RWPE1 (cell line): ENCODE measurements at regions of chr9 and their contacts with region 1.

Region 1: DNA sequence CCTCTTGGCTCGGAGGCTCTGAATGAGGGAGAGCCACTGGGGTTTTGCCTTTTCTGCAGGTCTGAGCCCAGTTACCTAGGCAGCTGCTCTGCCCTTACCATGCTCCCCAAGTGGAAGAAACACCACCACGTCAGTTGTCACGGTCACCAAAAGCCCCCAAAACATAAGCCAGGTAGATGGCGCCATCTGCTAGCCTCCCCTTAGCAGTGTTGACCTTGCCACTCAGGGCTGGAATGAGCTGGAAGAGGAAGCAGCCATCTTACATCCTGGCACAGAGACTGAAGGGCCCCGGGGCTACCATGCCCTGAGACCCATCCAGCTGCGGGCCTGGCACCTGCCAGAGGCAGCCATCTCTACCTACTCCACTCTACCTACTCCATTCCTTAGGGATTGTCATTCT is 7.4 kb downstream of the ZER1 start:
- DNase-seq: no peak
- H3K27ac ChIP-seq: no peak overlapping the region; the same call in 1 of the 2 replicates
- CTCF ChIP-seq: no peak

Region 2: GRCh38 chr9:128810873-128811272 is 46.5 kb after region 1 on chr9:
- CTCF ChIA-PET with region 1: interaction called, 10 read pairs
- POLR2A ChIA-PET with region 1: no interaction called
- DNase-seq: no peak
- H3K27ac ChIP-seq: no peak overlapping the region
- CTCF ChIP-seq: no peak

Region 3: DNA sequence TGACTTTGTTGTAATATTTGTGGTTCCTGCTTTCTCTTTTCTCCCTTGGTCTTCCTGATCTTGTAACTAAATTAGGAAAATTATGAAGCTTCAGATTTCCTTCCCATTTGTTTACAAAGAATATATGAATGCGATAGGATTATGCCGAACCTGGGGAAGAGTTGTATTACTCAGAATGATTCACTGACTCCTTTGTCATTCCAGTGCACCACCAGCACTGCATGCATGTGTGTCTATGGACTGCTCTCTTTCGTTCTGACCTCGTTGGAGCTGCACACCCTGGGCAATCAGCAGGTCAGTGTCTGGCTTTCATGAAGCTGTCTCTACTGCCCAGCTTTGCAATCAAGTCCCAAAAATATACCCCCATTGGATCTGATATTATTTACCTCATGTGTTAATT is 208.6 kb after region 1 on chr9:
- CTCF ChIA-PET with region 1: no interaction called
- POLR2A ChIA-PET with region 1: no interaction called
- DNase-seq: peak; percentile 85
- H3K27ac ChIP-seq: no peak overlapping the region
- CTCF ChIP-seq: no peak